ENCODE measurements at regions of chr2 and their contacts with region 1.

Region 1: GRCh38 chr2:27683390-27684071 is 19.8 kb downstream of the SLC4A1AP start:
- DNase-seq: peak; percentile 93
- ATAC-seq: peak; percentile 86
- H3K4me3 Mint-ChIP-seq: no peak overlapping the region
- H3K27ac Mint-ChIP-seq: peak overlapping the region; percentile 90
- H3K4me1 Mint-ChIP-seq: peaks cover 46% of the 10 kb centered on the region
- H3K27me3 Mint-ChIP-seq: no peaks in the 10 kb centered on the region

Region 2: DNA sequence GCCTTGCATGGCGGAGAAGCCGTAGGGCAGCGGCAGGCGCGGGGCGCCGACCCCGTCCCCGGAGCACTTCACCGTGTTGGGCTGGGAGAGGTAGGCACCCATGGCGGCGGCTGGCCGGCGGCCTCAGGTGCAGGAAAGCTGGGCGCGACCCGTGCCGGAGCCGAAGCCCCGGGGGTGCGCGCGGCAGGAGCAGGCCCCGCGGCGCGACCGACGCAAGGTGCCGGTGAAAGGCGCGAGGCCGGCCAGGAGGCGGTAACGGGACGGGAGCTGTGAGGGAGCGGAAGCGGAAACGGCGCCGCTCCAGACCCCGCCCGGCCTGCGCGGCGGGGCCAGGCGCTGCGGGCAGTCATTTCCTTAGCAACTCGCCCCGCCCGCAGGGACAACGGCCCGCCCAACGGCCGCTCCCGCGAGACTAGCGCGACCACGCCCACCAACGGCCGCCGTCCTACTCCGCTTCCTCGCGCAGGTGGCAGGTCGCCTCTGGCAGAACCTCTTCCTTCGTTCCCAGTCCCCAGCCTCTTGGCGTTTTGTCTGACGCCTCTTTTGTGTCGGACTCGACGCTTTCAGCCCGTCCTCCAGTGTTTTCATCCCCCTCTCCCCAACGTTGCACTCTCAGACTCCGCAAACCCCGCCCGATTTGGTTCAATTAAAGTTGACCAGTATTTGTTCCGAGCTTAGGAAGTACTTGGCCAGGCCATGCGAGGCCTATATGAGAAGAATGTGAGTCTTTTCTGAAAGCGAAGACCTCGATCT is 274.0 kb before region 1 on chr2 and contains the start of gene PPM1G:
- CTCF ChIA-PET with region 1: interaction called, 22 read pairs
- DNase-seq: peak; percentile 97
- ATAC-seq: peak; percentile 97
- H3K4me3 Mint-ChIP-seq: peak within 1 kb of the TSS; percentile 79
- H3K27ac Mint-ChIP-seq: peak within 1 kb of the TSS; percentile 90
- H3K4me1 Mint-ChIP-seq: peaks cover 39% of the 10 kb centered on the region
- H3K27me3 Mint-ChIP-seq: peaks cover 4% of the 10 kb centered on the region
- total RNA-seq, gene PPM1G: 136 to 159 TPM

Region 3: GRCh38 chr2:27638037-27638637 is 45.4 kb before region 1 on chr2:
- CTCF ChIA-PET with region 1: interaction called, 10 read pairs
- DNase-seq: no peak
- ATAC-seq: peak; percentile 82
- H3K4me3 Mint-ChIP-seq: peak overlapping the region; percentile 20
- H3K27ac Mint-ChIP-seq: peak overlapping the region; percentile 76
- H3K4me1 Mint-ChIP-seq: peaks cover 30% of the 10 kb centered on the region
- H3K27me3 Mint-ChIP-seq: no peaks in the 10 kb centered on the region

Region 4: GRCh38 chr2:27672723-27673486 is 10.6 kb before region 1 on chr2:
- CTCF ChIA-PET with region 1: interaction called, 81 read pairs
- DNase-seq: no peak
- ATAC-seq: no peak
- H3K4me3 Mint-ChIP-seq: no peak overlapping the region
- H3K27ac Mint-ChIP-seq: peak overlapping the region; percentile 7
- H3K4me1 Mint-ChIP-seq: no peaks in the 10 kb centered on the region
- H3K27me3 Mint-ChIP-seq: no peaks in the 10 kb centered on the region

Region 5: GRCh38 chr2:28193627-28194403 is 510.3 kb after region 1 on chr2:
- CTCF ChIA-PET with region 1: no interaction called
- DNase-seq: no peak
- ATAC-seq: no peak
- H3K4me3 Mint-ChIP-seq: no peak overlapping the region
- H3K27ac Mint-ChIP-seq: peak overlapping the region; percentile 66
- H3K4me1 Mint-ChIP-seq: peaks cover 16% of the 10 kb centered on the region
- H3K27me3 Mint-ChIP-seq: no peaks in the 10 kb centered on the region